Activated T-helper 2 cell treated with anti-CD3 and anti-CD28 coated beads, Interferon-gamma antibody, Interleukin-2, Interleukin-4, amounts not matched to agents 10 μg/mL and 5 μg/mL and 100 μg/mL, durations not matched to agents 14 hours and 24 hours and 36 hours (primary cell): ENCODE measurements at regions of chr15 and their contacts with region 1.

Region 1: GRCh38 chr15:35545824-35546510 is at the start of gene DPH6:
- DNase-seq: peak; percentile 78
- H3K4me3 Mint-ChIP-seq: peak within 1 kb of the TSS; percentile 92
- H3K27ac Mint-ChIP-seq: peak within 1 kb of the TSS; percentile 96
- H3K4me1 Mint-ChIP-seq: peaks cover 16% of the 10 kb centered on the region
- H3K27me3 Mint-ChIP-seq: no peaks in the 10 kb centered on the region
- total RNA-seq, gene DPH6: 11.2 and 13.2 TPM in 2 replicates

Region 2: GRCh38 chr15:34993877-34994276 is 552.1 kb before region 1 on chr15:
- intact Hi-C with region 1: loop called (anchors 10 kb)
- DNase-seq: peak; percentile 37
- H3K4me3 Mint-ChIP-seq: peak overlapping the region; percentile 51
- H3K27ac Mint-ChIP-seq: peak overlapping the region; percentile 88
- H3K4me1 Mint-ChIP-seq: peaks cover 39% of the 10 kb centered on the region
- H3K27me3 Mint-ChIP-seq: peaks cover 7% of the 10 kb centered on the region

Region 3: DNA sequence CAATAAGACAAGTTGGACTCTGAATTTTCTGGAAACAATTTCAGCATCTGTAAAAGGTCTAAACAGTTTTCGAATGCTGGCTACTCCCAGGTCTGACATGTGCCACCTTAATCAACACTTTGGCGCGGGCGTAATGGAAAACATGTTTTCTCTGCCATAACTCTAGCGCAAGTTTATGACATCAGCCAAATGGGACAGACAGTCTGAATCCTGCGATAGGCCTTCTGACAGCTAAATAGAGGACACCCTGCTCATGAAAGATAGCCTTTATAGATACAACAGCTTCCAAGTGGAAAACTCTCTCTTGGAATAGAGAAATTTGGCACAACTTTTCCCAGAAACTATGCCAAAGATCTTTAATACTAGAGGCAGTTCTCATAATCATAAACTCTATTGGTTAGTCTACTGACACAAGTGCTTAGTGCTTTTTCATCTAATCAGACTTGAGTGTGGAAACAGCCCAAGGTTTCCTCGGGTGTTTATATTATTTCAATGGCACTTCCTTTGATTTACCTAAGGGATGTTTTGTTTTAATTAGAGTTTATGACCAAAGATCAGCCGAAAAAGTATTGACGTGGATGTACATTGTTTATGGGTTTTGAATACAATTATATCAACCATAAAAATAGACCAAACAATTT is 120.0 kb after region 1 on chr15:
- intact Hi-C with region 1: loop called (anchors 10 kb)
- DNase-seq: no peak
- H3K4me3 Mint-ChIP-seq: no peak overlapping the region
- H3K27ac Mint-ChIP-seq: no peak overlapping the region
- H3K4me1 Mint-ChIP-seq: no peaks in the 10 kb centered on the region
- H3K27me3 Mint-ChIP-seq: no peaks in the 10 kb centered on the region

Region 4: GRCh38 chr15:35680951-35681350 is 135.0 kb after region 1 on chr15:
- intact Hi-C with region 1: no loop called
- DNase-seq: no peak
- H3K4me3 Mint-ChIP-seq: no peak overlapping the region
- H3K27ac Mint-ChIP-seq: no peak overlapping the region
- H3K4me1 Mint-ChIP-seq: no peaks in the 10 kb centered on the region
- H3K27me3 Mint-ChIP-seq: peaks cover 7% of the 10 kb centered on the region

Region 5: GRCh38 chr15:35697549-35698299 is 151.8 kb after region 1 on chr15:
- intact Hi-C with region 1: no loop called
- DNase-seq: no peak
- H3K4me3 Mint-ChIP-seq: no peak overlapping the region
- H3K27ac Mint-ChIP-seq: no peak overlapping the region
- H3K4me1 Mint-ChIP-seq: no peaks in the 10 kb centered on the region
- H3K27me3 Mint-ChIP-seq: no peaks in the 10 kb centered on the region